Activated CD4-positive, alpha-beta memory T cell treated with anti-CD3 and anti-CD28 coated beads for 36 hours (primary cell): ENCODE measurements at regions of chr1 and their contacts with region 1.

Region 1: DNA sequence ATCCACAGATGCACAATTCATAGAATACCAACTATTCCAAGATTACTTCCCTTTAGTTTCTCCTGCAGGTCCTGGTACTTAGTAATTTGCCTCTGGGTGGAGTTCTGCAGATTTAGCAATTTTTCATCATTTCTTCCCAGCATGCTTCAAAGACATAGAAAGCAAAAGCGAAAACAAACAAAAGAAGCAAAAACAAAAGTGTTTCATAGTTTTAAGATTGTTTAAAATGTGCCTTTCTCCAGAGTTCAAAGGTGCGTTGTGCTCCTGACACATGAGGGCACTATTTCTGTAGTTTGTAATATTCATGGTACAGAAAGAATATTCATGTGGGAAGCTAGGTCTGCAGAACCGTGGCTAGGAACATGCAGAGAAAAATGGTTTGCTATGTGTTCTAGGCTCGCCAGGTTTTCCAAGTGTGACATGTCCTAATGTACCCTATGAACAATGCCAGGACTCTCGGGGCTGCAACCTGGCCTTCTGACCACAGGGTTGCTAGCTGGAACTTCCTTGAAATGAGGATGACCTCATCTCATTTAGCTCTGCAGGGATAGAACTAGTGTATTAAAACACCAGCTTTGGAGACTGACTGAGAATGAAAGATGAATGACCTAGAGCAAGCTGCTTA is 30.0 kb upstream of the RCSD1 start:
- DNase-seq: peak; percentile 53
- H3K4me3 Mint-ChIP-seq: peak overlapping the region; percentile 61
- H3K27ac Mint-ChIP-seq: peak overlapping the region; percentile 64
- H3K4me1 Mint-ChIP-seq: peaks cover 37% of the 10 kb centered on the region
- H3K27me3 Mint-ChIP-seq: no peaks in the 10 kb centered on the region

Region 2: DNA sequence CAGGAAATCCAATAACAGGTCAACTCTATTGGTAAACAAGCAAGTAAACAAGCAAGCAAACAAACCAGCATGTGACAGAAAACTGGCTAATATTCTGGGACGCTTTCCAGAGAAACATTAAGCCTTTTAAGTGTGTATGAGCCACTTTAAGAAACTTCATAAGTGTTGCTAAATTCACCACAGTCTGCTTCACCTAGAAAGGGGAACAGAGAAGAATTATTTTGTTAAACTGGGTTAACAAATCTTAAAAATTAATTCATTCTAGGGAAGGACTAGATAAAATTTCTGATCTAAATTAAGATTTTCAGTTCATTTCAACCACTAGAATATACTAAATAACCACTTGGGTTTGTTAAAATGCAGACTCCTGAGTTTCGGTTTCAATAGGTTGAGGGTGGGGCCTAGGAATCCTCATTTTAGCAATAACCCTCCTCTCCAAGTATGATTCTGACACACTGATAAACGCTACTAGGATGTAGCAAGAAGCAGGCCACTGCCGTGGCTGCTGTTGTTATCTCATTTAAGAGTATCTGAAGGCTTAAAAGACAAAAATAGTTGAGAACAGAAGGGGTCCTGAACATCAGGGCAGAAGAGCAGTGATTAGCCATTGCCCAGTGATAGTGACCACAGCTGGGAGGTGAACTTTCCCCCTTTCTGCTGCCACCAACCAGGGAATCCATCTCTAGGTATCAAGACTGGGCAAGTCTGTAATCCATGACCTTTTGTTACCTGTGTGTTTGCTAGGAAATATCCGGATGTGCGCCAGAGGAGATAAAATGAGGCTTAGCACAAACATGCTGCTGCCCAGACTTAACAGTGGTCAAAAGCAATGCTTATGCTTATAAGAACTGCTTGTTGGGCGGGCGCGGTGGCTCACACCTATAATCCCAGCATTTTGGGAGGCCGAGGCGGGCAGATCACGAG is 57.7 kb before region 1 on chr1:
- CTCF ChIA-PET with region 1: no interaction called
- POLR2A ChIA-PET with region 1: no interaction called
- intact Hi-C with region 1: no loop called
- DNase-seq: peak; percentile 33
- H3K4me3 Mint-ChIP-seq: no peak overlapping the region
- H3K27ac Mint-ChIP-seq: peak overlapping the region; percentile 18
- H3K4me1 Mint-ChIP-seq: peaks cover 46% of the 10 kb centered on the region
- H3K27me3 Mint-ChIP-seq: no peaks in the 10 kb centered on the region

Region 3: GRCh38 chr1:167627865-167628641 is 28.0 kb after region 1 on chr1:
- CTCF ChIA-PET with region 1: interaction called, 98 read pairs
- POLR2A ChIA-PET with region 1: interaction called, 21 read pairs
- intact Hi-C with region 1: loop called (anchors 1 kb)
- DNase-seq: peak; percentile 90
- H3K4me3 Mint-ChIP-seq: peak overlapping the region; percentile 92
- H3K27ac Mint-ChIP-seq: peak overlapping the region; percentile 99
- H3K4me1 Mint-ChIP-seq: peaks cover 46% of the 10 kb centered on the region
- H3K27me3 Mint-ChIP-seq: no peaks in the 10 kb centered on the region

Region 4: DNA sequence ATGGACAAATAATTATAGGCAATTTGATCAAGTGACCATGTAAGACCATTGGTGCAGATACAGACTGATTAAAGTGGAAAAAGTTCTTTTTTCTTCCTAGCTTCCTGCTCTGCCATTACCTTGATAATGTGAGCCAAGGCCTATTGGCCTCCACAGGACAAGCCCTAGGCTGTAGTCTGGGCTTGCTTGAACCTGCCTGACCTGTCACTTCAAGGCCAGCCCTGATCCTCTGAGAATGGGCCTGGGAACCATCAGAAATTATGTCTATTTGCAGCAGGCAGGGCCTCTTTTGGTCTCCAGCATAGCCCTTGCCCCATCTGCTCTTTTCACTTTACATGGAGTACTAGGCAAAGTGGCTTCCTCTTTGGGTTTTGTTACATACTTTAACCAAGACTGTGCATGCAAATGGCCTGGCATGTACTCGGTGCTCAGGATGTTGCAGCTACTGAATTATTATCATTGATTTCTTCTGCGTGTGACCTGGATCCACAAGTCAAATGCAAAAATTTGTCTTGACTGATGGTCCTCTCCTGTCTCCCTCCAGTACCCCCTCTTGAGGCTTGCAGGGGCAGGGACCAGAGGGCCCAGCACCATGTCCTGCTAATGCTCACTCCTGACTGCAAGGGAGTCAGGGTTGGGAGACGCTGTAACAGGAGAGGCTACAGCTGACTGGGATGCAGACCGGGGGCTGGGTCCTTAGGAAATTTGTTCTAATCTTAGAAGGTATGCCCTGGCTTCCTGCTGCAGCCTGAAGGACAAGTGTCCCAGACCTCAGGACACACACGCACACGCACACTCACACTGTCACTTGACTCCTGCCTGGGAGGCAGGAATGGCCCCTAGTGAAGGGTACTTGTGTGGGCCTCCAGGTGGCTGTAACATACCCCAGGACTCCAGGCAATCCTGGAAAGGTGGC is 69.4 kb after region 1 on chr1:
- CTCF ChIA-PET with region 1: interaction called, 26 read pairs
- POLR2A ChIA-PET with region 1: no interaction called
- intact Hi-C with region 1: no loop called
- DNase-seq: no peak
- H3K4me3 Mint-ChIP-seq: no peak overlapping the region
- H3K27ac Mint-ChIP-seq: no peak overlapping the region
- H3K4me1 Mint-ChIP-seq: peaks cover 70% of the 10 kb centered on the region
- H3K27me3 Mint-ChIP-seq: no peaks in the 10 kb centered on the region

Region 5: DNA sequence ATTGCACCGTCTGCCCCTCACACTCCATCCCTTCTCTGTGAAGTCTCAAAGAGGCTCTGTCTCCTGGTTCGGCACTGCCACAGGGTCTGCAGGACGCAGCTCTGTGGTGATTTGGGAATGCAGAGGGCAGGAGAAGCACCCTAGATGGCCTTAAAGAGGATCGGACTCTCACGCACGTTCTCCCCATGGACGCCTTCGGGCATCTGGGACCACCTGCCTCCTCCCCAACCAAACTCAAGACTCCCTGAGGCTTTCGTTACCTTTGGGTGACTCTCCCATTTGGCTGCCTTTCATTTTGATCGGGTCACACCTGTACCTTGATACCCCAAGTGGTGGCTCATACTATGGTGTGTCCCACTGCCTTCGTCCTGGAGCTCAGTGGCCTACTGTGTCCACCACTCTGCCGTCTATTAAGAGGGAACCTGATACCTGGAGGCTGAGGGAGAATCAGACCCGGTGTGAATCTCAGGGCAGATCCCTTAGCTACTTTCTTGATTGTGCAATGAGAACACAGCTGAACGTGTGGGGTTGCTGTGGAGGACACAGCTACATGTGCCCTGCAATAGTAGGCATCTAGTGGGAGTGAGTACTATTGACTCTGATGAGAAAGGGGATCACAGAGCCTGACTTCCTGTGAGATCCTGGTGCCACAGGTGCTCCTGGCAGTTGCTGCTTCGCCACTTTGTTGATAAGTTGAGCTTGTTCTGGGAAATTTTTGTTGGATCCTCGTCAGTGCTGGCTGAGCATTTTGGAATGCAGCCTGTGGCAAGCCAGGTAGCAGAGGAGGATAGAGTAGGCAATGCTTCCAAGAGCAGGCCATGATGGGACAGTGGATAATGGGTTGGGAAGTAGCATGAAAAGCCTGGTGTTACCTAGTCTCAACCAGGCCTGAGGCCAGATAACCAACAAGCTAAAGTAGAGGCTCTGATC is 93.3 kb after region 1 on chr1:
- CTCF ChIA-PET with region 1: interaction called, 227 read pairs
- POLR2A ChIA-PET with region 1: interaction called, 14 read pairs
- intact Hi-C with region 1: loop called (anchors 1 kb)
- DNase-seq: no peak
- H3K4me3 Mint-ChIP-seq: no peak overlapping the region
- H3K27ac Mint-ChIP-seq: peak overlapping the region; percentile 38
- H3K4me1 Mint-ChIP-seq: peaks cover 12% of the 10 kb centered on the region
- H3K27me3 Mint-ChIP-seq: no peaks in the 10 kb centered on the region

Region 6: GRCh38 chr1:167803358-167804207 is 203.5 kb after region 1 on chr1:
- CTCF ChIA-PET with region 1: interaction called, 6 read pairs
- POLR2A ChIA-PET with region 1: interaction called, 3 read pairs
- intact Hi-C with region 1: loop called (anchors 1 kb)
- DNase-seq: peak; percentile 95
- H3K4me3 Mint-ChIP-seq: peak overlapping the region; percentile 57
- H3K27ac Mint-ChIP-seq: peak overlapping the region; percentile 90
- H3K4me1 Mint-ChIP-seq: peaks cover 26% of the 10 kb centered on the region
- H3K27me3 Mint-ChIP-seq: no peaks in the 10 kb centered on the region